ENCODE measurements at regions of chr2 and their contacts with region 1.

Region 1: DNA sequence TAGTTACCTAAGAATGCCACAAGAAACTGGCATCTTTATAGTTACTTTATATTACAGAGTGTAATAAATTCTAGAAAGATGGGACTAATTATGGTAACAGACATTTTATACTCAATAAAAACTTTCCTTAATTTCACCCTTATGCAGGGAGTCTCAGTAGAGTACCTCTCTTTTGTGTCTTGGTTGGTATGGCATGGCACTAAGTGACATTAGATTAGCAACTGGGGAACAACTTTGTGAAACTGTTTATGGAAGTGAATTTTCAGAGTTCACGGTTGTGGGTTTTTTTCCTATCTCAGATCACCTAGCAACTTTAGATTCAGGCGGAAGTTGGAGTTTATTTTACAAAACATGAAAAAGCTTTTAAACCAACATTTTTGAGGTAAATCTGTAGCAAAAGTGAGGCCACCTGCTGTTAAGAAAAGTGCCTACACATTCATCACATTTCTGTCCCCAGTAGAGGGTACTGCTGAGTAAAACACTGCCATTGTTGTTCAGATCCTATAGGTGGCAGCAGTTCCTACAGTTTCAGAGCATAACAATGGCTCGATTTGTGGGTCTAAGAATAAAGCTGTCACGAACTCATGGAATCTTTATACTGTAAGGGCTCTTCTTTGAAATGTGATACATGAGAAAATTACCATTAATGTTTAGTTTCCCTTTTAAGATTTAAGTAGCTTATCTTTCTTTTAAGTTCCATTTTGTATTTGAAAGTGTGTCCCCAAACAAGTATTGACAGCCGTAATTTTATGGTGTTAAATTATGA is 117.6 kb downstream of the CAMKMT start:
- DNase-seq: peak in 1 of 2 donors; percentile 24
- H3K4me3 ChIP-seq: no peak overlapping the region
- H3K27ac ChIP-seq: no peak overlapping the region
- H3K4me1 ChIP-seq: no peaks in the 10 kb centered on the region
- H3K27me3 ChIP-seq: no peaks in the 10 kb centered on the region
- CTCF ChIP-seq: peak; percentile 99 to 100

Region 2: DNA sequence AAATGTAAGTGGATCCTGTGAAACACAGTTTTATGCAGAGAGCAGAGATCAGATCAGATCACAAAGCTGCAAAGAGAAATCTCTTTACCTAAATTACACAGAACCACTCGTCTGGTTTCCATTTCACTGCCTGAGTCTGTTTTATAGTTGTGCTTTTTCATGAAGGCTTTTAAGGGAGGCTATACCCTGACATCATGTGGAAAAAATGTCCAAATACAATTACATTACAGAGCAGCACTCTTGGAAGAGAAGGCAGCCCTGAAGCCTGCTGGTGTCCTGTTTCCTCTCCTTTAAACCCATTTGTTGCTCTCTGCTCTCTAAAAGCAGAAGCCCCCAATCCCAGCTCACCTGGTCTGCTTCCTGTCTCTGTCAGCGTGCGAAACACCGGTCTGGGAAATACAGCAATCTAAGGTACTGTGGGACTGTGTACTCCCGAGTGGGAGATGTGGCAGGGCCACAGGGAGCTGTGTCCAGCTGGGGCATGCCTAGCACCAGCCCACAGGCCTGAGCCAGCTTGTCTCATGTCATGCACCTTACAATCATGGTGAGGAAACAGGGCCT is 1228.1 kb before region 1 on chr2:
- intact Hi-C with region 1: no loop called
- DNase-seq: peak in 1 of 2 donors; percentile 69
- H3K4me3 ChIP-seq: peak overlapping the region in 1 of 2 donors; percentile 18
- H3K27ac ChIP-seq: peak overlapping the region; percentile 80 to 84
- H3K4me1 ChIP-seq: peaks cover 0 to 31% (median 23%) of the 10 kb centered on the region in 4 donors
- H3K27me3 ChIP-seq: no peaks in the 10 kb centered on the region
- CTCF ChIP-seq: no peak

Region 3: GRCh38 chr2:44044281-44044720 is 435.0 kb before region 1 on chr2:
- intact Hi-C with region 1: loop called (anchors 10 kb)
- DNase-seq: peak; percentile 81 to 91
- H3K4me3 ChIP-seq: no peak overlapping the region
- H3K27ac ChIP-seq: no peak overlapping the region
- H3K4me1 ChIP-seq: peaks cover 0 to 8% (median 7%) of the 10 kb centered on the region in 4 donors
- H3K27me3 ChIP-seq: no peaks in the 10 kb centered on the region
- CTCF ChIP-seq: peak; percentile 85 to 90

Measured in tibial artery (tissue), 4 donors.